Cardiac septum (tissue), 1 donor: ENCODE measurements at regions of chr12 and their contacts with region 1.

Region 1: GRCh38 chr12:5442251-5443006 is 10.5 kb downstream of the NTF3 start:
- DNase-seq: no peak

Region 2: GRCh38 chr12:5171701-5172100 is 270.7 kb before region 1 on chr12:
- intact Hi-C with region 1: loop called (anchors 5 kb)
- DNase-seq: no peak

Region 3: DNA sequence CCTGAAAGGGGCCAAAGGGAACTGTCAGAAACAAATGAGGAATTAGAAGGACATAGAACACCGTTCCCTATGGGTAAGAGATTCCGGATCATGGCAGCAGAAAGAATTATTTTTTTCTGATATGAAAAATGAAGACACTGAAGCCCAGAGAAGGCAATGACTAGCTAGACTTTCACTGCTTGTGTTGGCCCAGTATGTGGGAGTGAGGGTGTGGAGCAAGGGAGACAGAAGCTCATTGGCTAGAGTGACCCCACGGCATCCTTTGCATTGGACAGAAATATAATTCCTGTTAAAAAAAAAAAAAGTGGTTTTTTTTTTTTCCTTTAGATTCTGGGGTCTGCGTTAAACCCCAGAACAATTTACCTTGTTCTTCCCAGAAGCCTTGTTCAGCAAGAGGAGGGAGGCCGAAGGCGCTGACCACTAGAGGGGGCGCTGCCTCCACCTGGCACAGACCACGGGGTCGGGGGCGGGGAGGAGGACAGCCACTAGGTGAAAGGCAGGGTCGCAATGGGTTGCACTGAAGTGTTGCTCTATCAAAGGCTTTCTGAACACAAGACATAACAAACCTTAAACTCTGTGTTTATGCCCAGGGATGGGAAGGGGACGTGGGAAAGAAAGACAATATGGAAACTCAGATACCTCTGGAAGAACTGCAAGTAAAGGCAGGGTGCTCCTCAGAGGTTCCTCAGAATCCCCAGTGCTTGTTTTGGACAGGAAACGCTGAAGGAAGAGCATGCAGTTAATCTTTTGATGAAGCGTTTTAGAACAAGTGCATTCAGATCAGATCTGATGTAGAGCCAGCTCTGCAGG is 241.9 kb before region 1 on chr12:
- intact Hi-C with region 1: loop called (anchors 2 kb)
- DNase-seq: no peak

Region 4: GRCh38 chr12:5473076-5473782 is 30.8 kb after region 1 on chr12:
- intact Hi-C with region 1: no loop called
- DNase-seq: no peak

Region 5: GRCh38 chr12:5499566-5500330 is 57.3 kb after region 1 on chr12:
- intact Hi-C with region 1: no loop called
- DNase-seq: no peak